Gastrocnemius medialis (tissue), 4 donors: ENCODE measurements at regions of chr20 and their contacts with region 1.

Region 1: DNA sequence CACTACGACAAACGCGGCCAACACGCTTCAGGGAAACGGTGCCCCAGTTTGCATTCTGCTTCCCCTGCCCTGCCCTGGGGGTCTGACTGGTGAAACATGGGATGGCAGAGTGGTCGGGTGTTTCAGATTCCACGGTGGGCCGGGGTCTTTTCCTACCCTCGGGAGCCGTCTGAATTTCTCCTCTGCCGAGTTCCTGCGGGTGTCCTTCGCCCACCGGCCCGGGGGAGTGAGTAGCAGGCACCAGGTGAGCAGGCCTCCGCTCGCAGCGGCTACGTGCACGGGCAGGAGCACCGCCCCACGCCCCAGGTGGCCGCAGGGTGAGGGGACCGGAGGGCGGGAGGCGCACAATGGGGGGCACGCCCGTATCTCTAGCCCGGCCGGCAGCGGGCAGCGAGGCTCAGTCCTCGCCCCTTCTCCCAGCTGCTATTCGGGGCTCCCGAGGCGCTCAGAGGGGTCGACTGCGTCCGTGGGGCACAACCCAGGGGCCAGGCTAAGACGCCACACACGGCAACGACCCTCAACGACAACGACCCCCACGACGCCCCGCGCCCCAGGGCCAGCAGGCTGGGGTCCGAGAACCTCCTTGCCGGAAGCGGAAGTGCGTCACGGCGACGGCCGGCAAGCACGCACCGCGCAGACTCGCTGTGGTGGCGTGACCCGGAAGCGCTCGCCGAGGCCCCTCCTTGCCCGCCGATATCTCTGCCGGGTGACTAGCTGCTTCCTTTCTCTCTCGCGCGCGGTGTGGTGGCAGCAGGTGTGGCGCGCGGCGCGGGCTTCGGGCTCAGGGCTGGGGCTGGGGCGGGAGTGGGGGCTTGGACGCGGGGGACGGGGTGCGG is at the start of gene RPS21:
- DNase-seq: peak; percentile 91
- ATAC-seq: peak; percentile 90 to 91
- H3K4me3 ChIP-seq: peak within 1 kb of the TSS; percentile 80 to 100 (median 95)
- H3K27ac ChIP-seq: peak within 1 kb of the TSS; percentile 87 to 99 (median 96)
- H3K4me1 ChIP-seq: peaks cover 24 to 33% of the 10 kb centered on the region in 2 donors
- H3K27me3 ChIP-seq: no peaks in the 10 kb centered on the region
- CTCF ChIP-seq: peak in 1 of 5 experiments; percentile 16
- POLR2A ChIP-seq: peak; percentile 91 to 97
- total RNA-seq, gene RPS21: 1,167 to 4,037 (median 2,295) TPM

Region 2: DNA sequence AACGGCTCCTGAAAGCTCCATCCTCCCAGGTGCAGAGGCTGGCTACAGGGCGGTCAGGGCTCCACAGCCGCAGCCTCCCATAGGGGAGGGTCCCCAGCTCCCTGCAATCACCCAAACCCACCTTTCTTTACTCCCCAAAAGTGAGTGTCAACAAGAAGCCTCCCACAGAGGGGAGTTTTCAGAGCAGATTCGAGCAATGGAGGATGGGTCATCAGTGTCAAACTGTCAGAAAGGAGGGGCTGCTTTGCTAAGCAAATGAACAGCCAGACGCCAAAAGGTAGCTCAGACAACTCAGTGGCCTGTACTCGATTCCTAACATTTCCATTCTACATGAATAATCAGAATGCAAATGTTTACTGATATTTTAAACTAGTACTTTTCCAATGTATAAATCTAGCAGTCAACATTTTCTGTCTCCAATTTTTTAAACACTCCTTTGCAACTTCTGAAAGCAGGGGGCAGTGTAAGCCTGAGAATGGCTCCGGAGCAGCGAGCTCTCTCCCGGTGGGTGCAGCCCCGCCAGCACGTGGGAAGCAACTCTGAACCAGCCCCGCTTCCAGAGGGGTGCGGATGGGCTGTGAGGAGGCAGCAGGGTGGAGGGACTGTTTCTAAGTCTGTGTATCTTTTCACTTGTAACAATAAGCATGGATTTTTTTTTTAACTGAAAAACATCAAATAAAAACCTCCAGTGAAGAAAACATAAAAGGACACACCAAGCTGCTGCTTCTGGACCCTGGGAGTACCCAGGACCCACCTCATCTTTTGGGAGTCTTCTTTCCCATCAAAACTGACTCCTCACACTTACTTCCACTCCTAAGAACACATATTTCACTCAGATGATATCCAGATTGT is 375.8 kb before region 1 on chr20:
- in situ Hi-C with region 1: loop called in 1 of 4 experiments (anchors 25 kb)
- intact Hi-C with region 1: no loop called
- DNase-seq: peak in 1 of 2 donors; percentile 40
- ATAC-seq: peak in 1 of 2 donors; percentile 67
- H3K4me3 ChIP-seq: no peak overlapping the region
- H3K27ac ChIP-seq: no peak overlapping the region
- H3K4me1 ChIP-seq: peaks cover 0 to 5% of the 10 kb centered on the region in 2 donors
- H3K27me3 ChIP-seq: no peaks in the 10 kb centered on the region
- CTCF ChIP-seq: peak; percentile 57 to 67 (median 60)
- POLR2A ChIP-seq: no peak

Region 3: DNA sequence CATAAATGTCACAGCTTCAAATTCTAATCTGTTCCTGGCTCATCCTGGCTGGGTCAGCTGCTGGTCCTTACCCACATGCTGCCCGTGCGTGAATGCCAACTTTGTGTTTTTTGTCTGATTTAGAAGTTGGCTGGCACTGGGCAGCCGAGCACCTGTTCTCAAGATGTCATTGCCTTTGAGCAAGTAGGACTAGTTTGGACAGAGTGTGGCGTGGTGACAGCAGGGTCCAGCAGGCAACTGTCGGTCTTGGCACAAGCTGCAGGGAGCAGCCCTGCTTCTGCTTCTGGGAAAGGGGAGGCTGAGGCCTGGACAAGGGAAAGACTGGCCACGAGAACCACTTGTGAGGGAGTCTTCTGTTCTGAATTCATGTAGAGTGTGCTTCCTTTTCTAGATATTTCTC is 110.2 kb before region 1 on chr20:
- in situ Hi-C with region 1: loop called in 1 of 4 experiments (anchors 25 kb)
- intact Hi-C with region 1: no loop called
- DNase-seq: peak; percentile 94 to 98
- ATAC-seq: peak; percentile 90 to 94
- H3K4me3 ChIP-seq: no peak overlapping the region
- H3K27ac ChIP-seq: peak overlapping the region; percentile 77 to 95 (median 90)
- H3K4me1 ChIP-seq: peaks cover 17 to 29% of the 10 kb centered on the region in 2 donors
- H3K27me3 ChIP-seq: no peaks in the 10 kb centered on the region
- CTCF ChIP-seq: peak in 1 of 5 experiments; percentile 13
- POLR2A ChIP-seq: no peak

Region 4: DNA sequence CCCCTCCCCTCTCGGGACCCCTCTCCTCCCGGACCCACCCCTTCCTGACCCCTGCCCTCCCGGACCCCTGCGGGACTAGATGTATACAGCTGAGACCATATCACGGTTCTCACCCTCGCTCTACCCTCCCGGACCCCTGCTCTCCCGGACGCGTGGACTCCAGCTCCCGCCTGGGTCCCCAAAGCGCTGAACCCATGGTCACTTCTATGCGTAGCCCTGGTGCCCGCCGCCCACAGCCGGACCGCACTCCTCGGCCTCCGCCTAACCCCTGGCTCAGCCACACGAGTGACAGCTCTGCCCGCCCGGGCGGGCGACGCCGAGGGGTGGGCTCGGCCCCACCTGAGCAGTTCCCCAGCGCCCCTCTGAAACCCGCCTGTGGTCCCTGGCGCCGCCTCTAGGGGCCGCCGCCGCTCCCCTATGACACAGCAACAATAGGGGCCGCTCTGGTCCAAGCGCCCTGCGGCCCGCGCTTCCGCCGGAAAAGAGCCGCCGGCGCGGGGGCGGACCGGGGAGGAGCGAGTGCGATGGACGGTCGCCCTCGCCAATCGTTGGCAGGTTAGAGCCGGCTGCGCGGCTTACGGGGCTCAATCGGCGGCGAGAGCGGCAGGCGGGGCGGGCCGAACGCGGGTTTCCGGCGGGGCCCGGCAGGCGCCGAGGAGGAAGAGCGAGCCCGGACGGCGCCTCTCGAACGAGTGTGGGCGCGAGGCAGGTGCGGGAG is 84.1 kb before region 1 on chr20 and contains the start of gene ADRM1:
- in situ Hi-C with region 1: loop called in 3 of 4 experiments (anchors 10 to 25 kb)
- intact Hi-C with region 1: loop called (anchors 1 kb)
- DNase-seq: peak; percentile 93 to 95
- ATAC-seq: peak; percentile 76 to 80
- H3K4me3 ChIP-seq: peak within 1 kb of the TSS; percentile 61 to 96 (median 70)
- H3K27ac ChIP-seq: peak within 1 kb of the TSS; percentile 90 to 100 (median 98)
- H3K4me1 ChIP-seq: peaks cover 25 to 39% of the 10 kb centered on the region in 2 donors
- H3K27me3 ChIP-seq: no peaks in the 10 kb centered on the region
- CTCF ChIP-seq: peak; percentile 95 to 99 (median 99)
- POLR2A ChIP-seq: peak; percentile 88 to 90
- total RNA-seq, gene ADRM1: 389 to 644 (median 611) TPM

Region 5: DNA sequence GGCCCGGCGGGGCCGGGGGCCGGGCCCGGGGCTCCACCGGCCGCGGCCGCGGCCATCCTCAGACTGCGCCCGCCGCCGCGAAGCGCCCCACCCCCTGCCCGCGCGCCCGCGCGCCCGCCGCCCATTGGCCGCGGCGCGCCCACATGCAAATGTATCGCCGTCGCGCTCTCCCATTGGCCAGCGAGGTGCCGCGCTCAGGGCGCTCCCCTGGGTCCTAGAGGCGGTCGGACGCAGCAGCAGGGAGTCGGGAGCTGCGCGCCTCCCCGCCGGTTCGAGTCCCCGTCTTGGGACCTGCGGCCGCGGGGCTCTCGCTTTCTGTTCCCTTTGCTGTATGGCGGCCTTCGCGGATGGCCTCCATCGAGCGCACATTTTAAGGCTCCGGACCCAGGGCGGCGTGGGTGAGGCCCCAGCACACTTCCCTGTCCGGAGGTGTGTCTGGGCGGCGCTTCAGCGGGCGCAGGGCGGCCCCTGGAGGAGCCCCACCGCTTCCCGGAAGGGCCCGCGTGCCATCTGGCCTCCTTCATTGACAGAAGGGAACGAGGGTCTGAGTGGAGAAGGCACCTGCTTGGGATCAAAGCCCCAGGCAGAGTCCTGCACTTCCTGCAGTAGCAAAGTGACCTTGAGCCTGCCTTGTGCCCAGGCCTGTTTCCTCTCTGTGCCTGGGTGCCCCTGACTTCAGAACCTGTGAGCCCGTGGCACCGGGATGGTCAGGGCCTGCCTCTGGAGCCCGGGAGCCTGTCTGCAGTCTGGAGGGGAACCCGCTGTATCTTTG is 20.8 kb after region 1 on chr20 and contains the start of gene CABLES2:
- in situ Hi-C with region 1: no loop called
- intact Hi-C with region 1: loop called (anchors 2 kb)
- DNase-seq: peak; percentile 87 to 94
- ATAC-seq: peak; percentile 94 to 95
- H3K4me3 ChIP-seq: peak within 1 kb of the TSS; percentile 53 to 63 (median 62)
- H3K27ac ChIP-seq: peak within 1 kb of the TSS in 3 of 4 donors; percentile 3 to 62 (median 51)
- H3K4me1 ChIP-seq: peaks cover 20 to 25% of the 10 kb centered on the region in 2 donors
- H3K27me3 ChIP-seq: no peaks in the 10 kb centered on the region
- CTCF ChIP-seq: peak in 3 of 5 experiments; percentile 14 to 52 (median 44)
- POLR2A ChIP-seq: peak; percentile 15 to 52
- total RNA-seq, gene CABLES2: 3.6 to 9.3 (median 4.2) TPM

Region 6: DNA sequence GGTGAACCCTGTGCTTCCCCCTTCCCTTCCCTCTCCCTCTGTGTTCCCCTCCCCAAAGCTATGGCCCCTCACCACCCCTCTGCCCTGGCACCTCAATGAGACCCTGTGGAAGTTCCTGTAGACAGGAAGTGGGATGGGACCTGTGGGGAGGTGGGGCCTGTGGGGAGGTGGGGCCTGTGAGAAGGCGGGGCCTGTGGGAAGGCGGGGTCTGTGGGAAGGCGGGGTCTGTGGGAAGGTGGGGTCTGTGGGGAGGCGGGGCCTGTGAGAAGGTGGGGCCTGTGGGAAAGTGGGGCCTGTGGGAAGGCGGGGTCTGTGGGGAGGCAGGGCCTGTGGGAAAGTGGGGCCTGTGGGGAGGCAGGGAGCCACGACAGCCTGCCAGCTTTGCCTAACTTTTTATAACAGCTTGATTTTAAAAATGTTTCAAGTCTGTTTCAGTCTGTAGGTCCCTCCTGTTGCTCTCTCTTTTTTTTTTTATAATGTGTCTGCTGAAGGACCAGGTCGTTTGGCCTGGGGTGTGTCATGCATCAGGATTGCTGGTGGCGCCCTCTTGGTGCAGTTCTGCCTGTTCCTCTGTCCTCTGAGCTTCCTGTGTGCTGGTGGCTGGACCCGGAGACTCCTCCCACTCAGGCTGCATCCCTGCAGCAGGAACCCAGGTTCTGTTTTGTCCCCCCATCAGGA is 185.2 kb after region 1 on chr20:
- in situ Hi-C with region 1: no loop called
- intact Hi-C with region 1: no loop called
- DNase-seq: peak in 1 of 2 donors; percentile 48
- ATAC-seq: no peak
- H3K4me3 ChIP-seq: no peak overlapping the region
- H3K27ac ChIP-seq: peak overlapping the region; percentile 4 to 100 (median 86)
- H3K4me1 ChIP-seq: peaks cover 0 to 10% of the 10 kb centered on the region in 2 donors
- H3K27me3 ChIP-seq: no peaks in the 10 kb centered on the region
- CTCF ChIP-seq: peak in 1 of 5 experiments; percentile 15
- POLR2A ChIP-seq: no peak

Region 7: DNA sequence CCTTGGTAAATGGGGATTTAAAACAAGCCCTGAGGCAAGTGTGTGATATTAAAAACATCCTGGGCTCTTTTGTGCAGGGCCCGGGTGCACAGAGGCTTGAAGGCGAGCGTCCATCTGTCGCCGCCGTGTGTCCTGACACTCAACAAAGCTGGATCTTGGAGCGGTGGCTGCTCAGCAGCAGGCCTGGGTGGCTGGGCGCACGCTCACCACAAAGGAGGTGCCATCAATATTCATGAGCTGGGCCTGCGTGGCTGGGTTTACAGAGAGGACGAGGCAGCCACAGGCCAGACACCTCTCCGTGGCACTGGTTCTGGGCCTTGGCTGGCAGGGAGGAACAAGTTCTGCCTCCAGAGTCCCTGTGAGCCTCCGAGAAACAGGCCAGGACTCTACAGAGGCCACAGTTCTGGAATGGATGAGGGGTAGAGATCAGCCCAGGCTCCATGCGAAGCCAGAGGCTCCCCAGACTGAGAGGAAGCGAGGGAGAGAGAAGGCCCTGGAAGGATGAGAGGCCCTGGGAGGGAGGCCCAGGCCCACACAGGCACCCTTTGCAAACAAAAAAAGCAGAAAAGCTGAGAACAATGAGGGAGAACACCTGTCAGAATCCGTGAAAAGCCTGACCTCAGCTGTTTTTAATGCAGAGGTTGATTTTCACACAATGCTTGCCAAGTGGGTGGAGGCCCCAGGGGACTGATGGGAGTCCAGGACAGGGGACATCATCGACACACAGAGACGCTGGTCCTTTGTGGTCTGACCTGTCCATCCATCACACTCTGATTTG is 598.3 kb after region 1 on chr20:
- in situ Hi-C with region 1: no loop called
- intact Hi-C with region 1: no loop called
- DNase-seq: no peak
- ATAC-seq: no peak
- H3K4me3 ChIP-seq: no peak overlapping the region
- H3K27ac ChIP-seq: no peak overlapping the region
- H3K4me1 ChIP-seq: no peaks in the 10 kb centered on the region
- H3K27me3 ChIP-seq: peaks cover 52 to 71% (median 60%) of the 10 kb centered on the region in 3 donors
- CTCF ChIP-seq: no peak
- POLR2A ChIP-seq: no peak